ENCODE measurements at regions of chr2 and their contacts with region 1.

Region 1: GRCh38 chr2:147110317-147110716 is 734.5 kb upstream of the ACVR2A start:
- DNase-seq: no peak
- H3K4me3 Mint-ChIP-seq: no peak overlapping the region
- H3K27ac Mint-ChIP-seq: no peak overlapping the region
- H3K4me1 Mint-ChIP-seq: no peaks in the 10 kb centered on the region
- H3K27me3 Mint-ChIP-seq: no peaks in the 10 kb centered on the region
- CTCF ChIP-seq: no peak

Region 2: GRCh38 chr2:147099837-147100720 is 10.2 kb before region 1 on chr2:
- CTCF ChIA-PET with region 1: no interaction called
- POLR2A ChIA-PET with region 1: interaction called, 10 read pairs
- intact Hi-C with region 1: no loop called
- DNase-seq: peak; percentile 62
- H3K4me3 Mint-ChIP-seq: no peak overlapping the region
- H3K27ac Mint-ChIP-seq: peak overlapping the region; percentile 57
- H3K4me1 Mint-ChIP-seq: peaks cover 32% of the 10 kb centered on the region
- H3K27me3 Mint-ChIP-seq: no peaks in the 10 kb centered on the region
- CTCF ChIP-seq: no peak

Region 3: GRCh38 chr2:147223119-147223518 is 112.8 kb after region 1 on chr2:
- CTCF ChIA-PET with region 1: no interaction called
- POLR2A ChIA-PET with region 1: no interaction called
- intact Hi-C with region 1: no loop called
- DNase-seq: no peak
- H3K4me3 Mint-ChIP-seq: no peak overlapping the region
- H3K27ac Mint-ChIP-seq: no peak overlapping the region
- H3K4me1 Mint-ChIP-seq: no peaks in the 10 kb centered on the region
- H3K27me3 Mint-ChIP-seq: no peaks in the 10 kb centered on the region
- CTCF ChIP-seq: no peak

Measured in MCF 10A (cell line).